CD4-positive, alpha-beta T cell (primary cell): ENCODE measurements at regions of chr6 and their contacts with region 1.

Region 1: DNA sequence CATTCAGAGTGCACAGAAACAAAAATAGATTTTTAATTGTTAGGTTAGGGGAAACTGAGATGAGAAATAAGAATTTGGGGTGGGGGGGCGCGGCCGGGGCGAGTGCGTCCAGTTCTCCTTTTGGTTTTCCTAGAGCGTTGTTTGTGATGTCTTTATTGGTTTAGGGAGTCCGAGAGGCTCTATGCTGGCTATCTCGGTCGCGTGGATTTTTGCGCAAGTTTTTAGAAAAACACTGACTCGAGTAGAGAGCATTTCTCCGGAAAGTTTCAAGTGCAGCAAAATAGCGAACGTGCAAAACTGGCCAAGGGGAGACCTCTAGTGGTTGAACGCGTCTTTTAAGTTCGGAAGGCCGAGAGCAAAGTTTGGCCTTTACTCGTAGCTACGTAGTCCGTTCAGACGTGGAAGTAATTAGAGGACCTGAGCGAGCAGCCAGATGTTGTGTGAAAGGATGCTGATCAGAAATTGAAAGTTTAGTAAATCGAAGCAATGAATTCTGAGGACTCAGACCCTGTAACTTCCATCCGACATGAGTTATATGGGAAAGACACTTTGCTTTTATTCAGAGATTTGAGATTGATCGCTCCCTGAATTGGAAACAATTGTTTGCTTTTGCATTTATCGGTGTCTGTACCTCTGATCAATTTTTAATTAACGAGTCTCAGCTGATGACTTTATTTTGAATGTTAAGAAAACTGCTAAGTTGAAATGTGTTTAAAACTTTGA is 2.7 kb downstream of the L3MBTL3 start:
- DNase-seq: peak; percentile 64 to 92 (median 68)
- ATAC-seq: peak; percentile 51
- H3K4me3 ChIP-seq: peak overlapping the region; percentile 91
- H3K4me3 Mint-ChIP-seq: peak overlapping the region; percentile 100
- H3K27ac ChIP-seq: peak overlapping the region; percentile 31 to 71
- H3K27ac Mint-ChIP-seq: peak overlapping the region; percentile 96
- H3K4me1 ChIP-seq: peaks cover 14% of the 10 kb centered on the region
- H3K4me1 Mint-ChIP-seq: peaks cover 51% of the 10 kb centered on the region
- H3K27me3 ChIP-seq: no peaks in the 10 kb centered on the region
- H3K27me3 Mint-ChIP-seq: no peaks in the 10 kb centered on the region
- CTCF ChIP-seq: peak; percentile 75

Region 2: GRCh38 chr6:129598244-129599187 is 422.6 kb before region 1 on chr6:
- CTCF ChIA-PET with region 1: interaction called, 13 read pairs
- POLR2A ChIA-PET with region 1: interaction called, 8 read pairs
- intact Hi-C with region 1: loop called (anchors 1 to 2 kb)
- DNase-seq: peak in 4 of 14 experiments; percentile 8 to 84 (median 80)
- ATAC-seq: peak; percentile 98
- H3K4me3 ChIP-seq: no peak overlapping the region
- H3K4me3 Mint-ChIP-seq: no peak overlapping the region
- H3K27ac ChIP-seq: no peak overlapping the region
- H3K27ac Mint-ChIP-seq: no peak overlapping the region
- H3K4me1 ChIP-seq: no peaks in the 10 kb centered on the region
- H3K4me1 Mint-ChIP-seq: no peaks in the 10 kb centered on the region
- H3K27me3 ChIP-seq: no peaks in the 10 kb centered on the region
- H3K27me3 Mint-ChIP-seq: no peaks in the 10 kb centered on the region
- CTCF ChIP-seq: peak; percentile 90

Region 3: DNA sequence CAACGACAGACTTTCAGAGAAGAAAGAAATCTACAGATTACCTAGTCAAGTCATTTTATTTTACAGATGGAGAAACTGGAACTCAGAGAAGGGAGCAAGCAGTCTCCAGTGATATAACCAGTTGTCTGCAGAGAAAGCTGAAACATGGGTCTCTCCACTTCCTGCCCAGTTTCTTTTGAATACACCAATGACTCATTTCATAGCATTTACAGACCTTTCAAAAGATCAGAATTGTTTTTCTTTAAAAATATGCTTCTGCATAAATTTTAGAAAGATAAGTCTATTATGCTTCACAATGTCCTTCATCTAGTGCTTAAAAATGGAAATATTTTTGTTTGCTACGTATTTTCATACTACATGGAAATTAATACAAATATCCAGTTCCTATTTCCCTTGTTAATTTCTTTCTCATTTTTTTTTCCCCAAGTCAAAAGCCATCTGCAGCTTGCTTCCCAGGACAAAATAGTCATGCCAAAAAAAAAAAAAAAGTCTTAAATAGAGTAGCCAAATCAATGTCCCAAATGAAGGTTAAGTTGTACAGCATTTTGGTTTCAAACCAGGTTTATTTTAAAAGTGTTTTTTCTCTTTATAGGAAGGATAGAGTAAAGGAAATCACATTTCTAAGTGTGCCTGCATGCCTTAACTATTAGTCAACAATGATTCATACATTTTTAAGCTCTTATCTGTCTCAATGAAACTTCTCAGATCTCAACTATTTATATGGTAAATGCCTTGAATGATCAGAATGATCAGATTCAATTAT is 348.0 kb before region 1 on chr6:
- CTCF ChIA-PET with region 1: interaction called, 3 read pairs
- POLR2A ChIA-PET with region 1: no interaction called
- intact Hi-C with region 1: loop called in 1 of 2 experiments (anchors 5 kb)
- DNase-seq: peak in 4 of 14 experiments; percentile 38 to 70 (median 56)
- ATAC-seq: peak; percentile 48
- H3K4me3 ChIP-seq: no peak overlapping the region
- H3K4me3 Mint-ChIP-seq: peak overlapping the region; percentile 79
- H3K27ac ChIP-seq: peak overlapping the region in 1 of 2 donors; percentile 68
- H3K27ac Mint-ChIP-seq: peak overlapping the region; percentile 85
- H3K4me1 ChIP-seq: peaks cover 12% of the 10 kb centered on the region
- H3K4me1 Mint-ChIP-seq: peaks cover 34% of the 10 kb centered on the region
- H3K27me3 ChIP-seq: no peaks in the 10 kb centered on the region
- H3K27me3 Mint-ChIP-seq: no peaks in the 10 kb centered on the region
- CTCF ChIP-seq: no peak

Region 4: DNA sequence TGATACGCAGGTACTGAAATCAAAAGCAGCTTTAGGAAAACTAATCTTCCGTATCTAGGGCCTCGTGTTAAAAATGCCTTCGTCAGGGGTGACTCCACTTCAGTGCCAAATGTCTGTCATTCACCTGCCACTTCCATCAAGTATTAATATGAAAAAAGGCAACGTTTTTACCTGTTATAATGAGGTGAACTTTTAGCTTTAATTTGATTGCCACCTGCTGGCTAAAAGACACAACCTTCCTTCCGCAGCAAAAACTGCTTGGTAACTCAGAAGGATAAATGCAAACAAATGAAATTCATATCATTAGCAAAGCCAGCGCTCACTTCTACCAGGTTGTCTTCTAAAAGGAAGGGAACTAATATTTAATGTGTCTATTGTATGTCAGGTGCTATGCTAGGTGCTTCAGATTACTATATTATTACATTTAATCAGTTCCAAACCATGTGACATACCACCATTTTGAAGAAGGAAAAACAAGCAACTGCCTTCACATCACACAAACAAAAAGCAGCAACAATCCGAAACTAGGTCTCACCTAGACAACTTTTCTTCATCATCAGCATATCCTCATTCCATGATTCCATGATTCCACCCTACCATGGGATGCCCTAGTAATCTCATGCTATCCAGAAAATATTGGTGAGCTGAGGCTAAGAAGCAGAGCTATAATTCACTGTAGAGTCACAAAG is 290.4 kb before region 1 on chr6:
- CTCF ChIA-PET with region 1: interaction called, 4 read pairs
- POLR2A ChIA-PET with region 1: interaction called, 3 read pairs
- intact Hi-C with region 1: loop called (anchors 5 kb)
- DNase-seq: peak in 7 of 14 experiments; percentile 7 to 73 (median 54)
- ATAC-seq: peak; percentile 60
- H3K4me3 ChIP-seq: no peak overlapping the region
- H3K4me3 Mint-ChIP-seq: no peak overlapping the region
- H3K27ac ChIP-seq: no peak overlapping the region
- H3K27ac Mint-ChIP-seq: no peak overlapping the region
- H3K4me1 ChIP-seq: no peaks in the 10 kb centered on the region
- H3K4me1 Mint-ChIP-seq: peaks cover 14% of the 10 kb centered on the region
- H3K27me3 ChIP-seq: no peaks in the 10 kb centered on the region
- H3K27me3 Mint-ChIP-seq: no peaks in the 10 kb centered on the region
- CTCF ChIP-seq: peak; percentile 83

Region 5: GRCh38 chr6:129785047-129785755 is 235.9 kb before region 1 on chr6:
- CTCF ChIA-PET with region 1: no interaction called
- POLR2A ChIA-PET with region 1: no interaction called
- intact Hi-C with region 1: no loop called
- DNase-seq: no peak
- ATAC-seq: no peak
- H3K4me3 ChIP-seq: no peak overlapping the region
- H3K4me3 Mint-ChIP-seq: no peak overlapping the region
- H3K27ac ChIP-seq: no peak overlapping the region
- H3K27ac Mint-ChIP-seq: no peak overlapping the region
- H3K4me1 ChIP-seq: no peaks in the 10 kb centered on the region
- H3K4me1 Mint-ChIP-seq: no peaks in the 10 kb centered on the region
- H3K27me3 ChIP-seq: peaks cover 0 to 4% of the 10 kb centered on the region in 2 experiments
- H3K27me3 Mint-ChIP-seq: no peaks in the 10 kb centered on the region
- CTCF ChIP-seq: no peak

Region 6: GRCh38 chr6:129893640-129894039 is 127.4 kb before region 1 on chr6:
- CTCF ChIA-PET with region 1: interaction called, 4 read pairs
- POLR2A ChIA-PET with region 1: no interaction called
- intact Hi-C with region 1: loop called (anchors 1 kb)
- DNase-seq: peak in 3 of 14 experiments; percentile 46 to 48 (median 46)
- ATAC-seq: no peak
- H3K4me3 ChIP-seq: no peak overlapping the region
- H3K4me3 Mint-ChIP-seq: no peak overlapping the region
- H3K27ac ChIP-seq: no peak overlapping the region
- H3K27ac Mint-ChIP-seq: no peak overlapping the region
- H3K4me1 ChIP-seq: no peaks in the 10 kb centered on the region
- H3K4me1 Mint-ChIP-seq: no peaks in the 10 kb centered on the region
- H3K27me3 ChIP-seq: no peaks in the 10 kb centered on the region
- H3K27me3 Mint-ChIP-seq: peaks cover 6% of the 10 kb centered on the region
- CTCF ChIP-seq: peak; percentile 22

Region 7: GRCh38 chr6:129936329-129937165 is 84.5 kb before region 1 on chr6:
- CTCF ChIA-PET with region 1: interaction called, 4 read pairs
- POLR2A ChIA-PET with region 1: no interaction called
- intact Hi-C with region 1: loop called (anchors 1 to 2 kb)
- DNase-seq: peak in 12 of 14 experiments; percentile 4 to 72 (median 25)
- ATAC-seq: no peak
- H3K4me3 ChIP-seq: no peak overlapping the region
- H3K4me3 Mint-ChIP-seq: no peak overlapping the region
- H3K27ac ChIP-seq: no peak overlapping the region
- H3K27ac Mint-ChIP-seq: no peak overlapping the region
- H3K4me1 ChIP-seq: no peaks in the 10 kb centered on the region
- H3K4me1 Mint-ChIP-seq: peaks cover 4% of the 10 kb centered on the region
- H3K27me3 ChIP-seq: peaks cover 0 to under 1% of the 10 kb centered on the region in 2 experiments
- H3K27me3 Mint-ChIP-seq: peaks cover 24% of the 10 kb centered on the region
- CTCF ChIP-seq: peak; percentile 88

Region 8: DNA sequence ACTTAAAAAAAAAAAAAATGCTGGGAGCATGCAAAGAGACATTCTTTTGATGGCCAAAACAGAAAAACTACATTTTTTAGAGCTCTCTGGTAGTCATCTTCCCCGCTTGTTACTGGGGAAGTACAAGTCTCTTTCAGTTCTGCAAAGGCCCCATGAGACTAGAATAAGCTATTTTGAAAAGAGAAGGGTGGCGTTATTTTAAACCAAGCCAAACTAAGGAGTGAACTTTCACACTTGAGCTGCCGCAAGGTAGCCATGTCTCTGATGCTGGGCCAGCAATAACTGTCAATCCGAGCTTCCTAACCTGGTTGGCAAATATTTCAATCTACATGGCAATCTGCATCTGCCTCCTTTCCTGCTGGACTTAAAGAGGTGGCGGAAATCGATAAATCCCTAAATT is 94.0 kb after region 1 on chr6:
- CTCF ChIA-PET with region 1: no interaction called
- POLR2A ChIA-PET with region 1: no interaction called
- intact Hi-C with region 1: no loop called
- DNase-seq: no peak
- ATAC-seq: no peak
- H3K4me3 ChIP-seq: no peak overlapping the region
- H3K4me3 Mint-ChIP-seq: no peak overlapping the region
- H3K27ac ChIP-seq: no peak overlapping the region
- H3K27ac Mint-ChIP-seq: no peak overlapping the region
- H3K4me1 ChIP-seq: no peaks in the 10 kb centered on the region
- H3K4me1 Mint-ChIP-seq: peaks cover 33% of the 10 kb centered on the region
- H3K27me3 ChIP-seq: no peaks in the 10 kb centered on the region
- H3K27me3 Mint-ChIP-seq: no peaks in the 10 kb centered on the region
- CTCF ChIP-seq: no peak